Activated B cell treated with CpG ODN at 0.5 μM for 24 hours (primary cell): ENCODE measurements at regions of chr9 and their contacts with region 1.

Region 1: GRCh38 chr9:105244003-105244733 is at the start of gene SLC44A1:
- DNase-seq: peak; percentile 86
- ATAC-seq: peak; percentile 82
- H3K4me3 Mint-ChIP-seq: peak within 1 kb of the TSS; percentile 92
- H3K27ac Mint-ChIP-seq: peak within 1 kb of the TSS; percentile 84
- H3K4me1 Mint-ChIP-seq: peaks cover 29% of the 10 kb centered on the region
- H3K27me3 Mint-ChIP-seq: peaks cover 8% of the 10 kb centered on the region
- CTCF ChIP-seq: no peak
- total RNA-seq, gene SLC44A1: 9.5 and 10.1 TPM in 2 replicates

Region 2: GRCh38 chr9:104093647-104094533 is 1150.3 kb before region 1 on chr9 and contains the start of gene SMC2:
- CTCF ChIA-PET with region 1: no interaction called
- POLR2A ChIA-PET with region 1: interaction called, 6 read pairs
- intact Hi-C with region 1: loop called (anchors 1 kb)
- DNase-seq: peak; percentile 90
- ATAC-seq: peak; percentile 97
- H3K4me3 Mint-ChIP-seq: peak within 1 kb of the TSS; percentile 99
- H3K27ac Mint-ChIP-seq: peak within 1 kb of the TSS; percentile 99
- H3K4me1 Mint-ChIP-seq: peaks cover 31% of the 10 kb centered on the region
- H3K27me3 Mint-ChIP-seq: no peaks in the 10 kb centered on the region
- CTCF ChIP-seq: no peak
- total RNA-seq, gene SMC2: 12.5 and 13.5 TPM in 2 replicates

Region 3: GRCh38 chr9:104774831-104775573 is 469.2 kb before region 1 on chr9:
- CTCF ChIA-PET with region 1: no interaction called
- POLR2A ChIA-PET with region 1: interaction called, 4 read pairs
- intact Hi-C with region 1: loop called (anchors 1 kb)
- DNase-seq: no peak
- ATAC-seq: peak; percentile 86
- H3K4me3 Mint-ChIP-seq: no peak overlapping the region
- H3K27ac Mint-ChIP-seq: no peak overlapping the region
- H3K4me1 Mint-ChIP-seq: peaks cover 37% of the 10 kb centered on the region
- H3K27me3 Mint-ChIP-seq: no peaks in the 10 kb centered on the region
- CTCF ChIP-seq: no peak

Region 4: GRCh38 chr9:104927912-104928740 is 316.0 kb before region 1 on chr9 and contains the start of gene ABCA1:
- CTCF ChIA-PET with region 1: no interaction called
- POLR2A ChIA-PET with region 1: interaction called, 7 read pairs
- intact Hi-C with region 1: loop called (anchors 1 kb)
- DNase-seq: peak; percentile 64
- ATAC-seq: peak; percentile 73
- H3K4me3 Mint-ChIP-seq: peak within 1 kb of the TSS; percentile 93
- H3K27ac Mint-ChIP-seq: peak within 1 kb of the TSS; percentile 68
- H3K4me1 Mint-ChIP-seq: peaks cover 42% of the 10 kb centered on the region
- H3K27me3 Mint-ChIP-seq: no peaks in the 10 kb centered on the region
- CTCF ChIP-seq: no peak
- total RNA-seq, gene ABCA1: 1.7 and 2.3 TPM in 2 replicates

Region 5: GRCh38 chr9:104991144-104991953 is 252.8 kb before region 1 on chr9:
- CTCF ChIA-PET with region 1: no interaction called
- POLR2A ChIA-PET with region 1: no interaction called
- intact Hi-C with region 1: loop called (anchors 1 kb)
- DNase-seq: peak; percentile 69
- ATAC-seq: peak; percentile 80
- H3K4me3 Mint-ChIP-seq: peak overlapping the region; percentile 86
- H3K27ac Mint-ChIP-seq: peak overlapping the region; percentile 69
- H3K4me1 Mint-ChIP-seq: peaks cover 33% of the 10 kb centered on the region
- H3K27me3 Mint-ChIP-seq: peaks cover 2% of the 10 kb centered on the region
- CTCF ChIP-seq: no peak

Region 6: GRCh38 chr9:105385381-105385985 is 141.3 kb after region 1 on chr9:
- CTCF ChIA-PET with region 1: no interaction called
- POLR2A ChIA-PET with region 1: no interaction called
- intact Hi-C with region 1: loop called (anchors 1 kb)
- DNase-seq: peak; percentile 17
- ATAC-seq: peak; percentile 94
- H3K4me3 Mint-ChIP-seq: peak overlapping the region; percentile 77
- H3K27ac Mint-ChIP-seq: peak overlapping the region; percentile 73
- H3K4me1 Mint-ChIP-seq: peaks cover 14% of the 10 kb centered on the region
- H3K27me3 Mint-ChIP-seq: no peaks in the 10 kb centered on the region
- CTCF ChIP-seq: no peak

Region 7: DNA sequence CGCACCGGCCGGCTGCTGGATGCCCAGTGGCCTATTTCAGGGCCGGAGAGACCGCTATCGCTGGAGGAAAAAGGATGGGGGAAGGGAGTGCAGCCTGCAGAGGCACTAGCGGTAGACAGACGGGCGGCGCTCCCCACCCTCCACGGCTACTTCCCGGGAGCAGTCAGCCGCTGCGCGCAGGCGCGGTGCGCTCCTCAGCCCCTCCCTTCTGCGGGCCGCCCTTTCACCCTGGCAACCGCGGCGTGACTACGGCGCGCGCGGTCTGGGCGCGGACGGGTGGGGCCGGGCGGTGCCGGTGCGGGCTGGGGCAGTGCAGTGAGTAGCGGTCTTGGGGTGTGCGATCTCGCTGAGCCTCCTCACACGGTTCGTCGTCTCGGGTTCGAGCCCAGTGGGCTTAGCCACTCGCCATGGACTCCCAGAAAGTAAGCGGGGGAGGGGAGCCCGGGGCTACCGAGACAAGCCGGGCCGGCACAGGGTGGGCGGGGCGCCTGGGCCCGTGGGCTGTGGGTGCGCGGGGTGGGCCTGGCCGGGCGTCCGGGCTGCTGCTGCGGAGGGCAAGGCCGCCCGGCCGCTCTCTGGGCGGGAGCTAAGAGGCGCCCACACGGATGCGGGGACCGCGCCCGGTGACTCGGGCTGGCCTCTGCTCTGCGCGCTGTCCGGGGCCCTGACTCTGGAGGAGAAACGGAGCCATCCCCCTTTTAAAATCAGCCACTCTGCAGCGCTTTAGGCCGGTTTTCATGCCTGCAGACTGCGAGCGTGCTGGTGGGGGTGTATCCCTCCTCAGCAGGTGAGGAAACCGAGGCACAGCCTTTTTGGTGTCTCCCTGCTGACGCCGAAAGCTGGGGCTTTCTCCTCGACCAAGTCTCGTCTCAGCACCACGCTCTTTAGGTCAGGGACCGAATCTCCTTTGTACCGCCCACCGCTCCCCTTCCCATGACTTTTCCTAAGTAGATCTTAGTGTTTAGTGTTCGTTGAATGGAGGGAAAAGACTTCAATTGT is 203.9 kb after region 1 on chr9 and contains the start of gene FSD1L:
- CTCF ChIA-PET with region 1: no interaction called
- POLR2A ChIA-PET with region 1: interaction called, 6 read pairs
- intact Hi-C with region 1: loop called (anchors 2 kb)
- DNase-seq: peak; percentile 89
- ATAC-seq: peak; percentile 92
- H3K4me3 Mint-ChIP-seq: peak within 1 kb of the TSS; percentile 90
- H3K27ac Mint-ChIP-seq: peak within 1 kb of the TSS; percentile 75
- H3K4me1 Mint-ChIP-seq: peaks cover 17% of the 10 kb centered on the region
- H3K27me3 Mint-ChIP-seq: no peaks in the 10 kb centered on the region
- CTCF ChIP-seq: no peak
- total RNA-seq, gene FSD1L: 10.2 and 12.4 TPM in 2 replicates